Endothelial cell of umbilical vein (primary cell): ENCODE measurements at regions of chr7 and their contacts with region 1.

Region 1: GRCh38 chr7:15874774-15875173 is 188.3 kb upstream of the MEOX2 start:
- DNase-seq: peak; percentile 45
- H3K4me3 ChIP-seq: no peak overlapping the region
- H3K27ac ChIP-seq: no peak overlapping the region
- H3K4me1 ChIP-seq: no peaks in the 10 kb centered on the region
- H3K27me3 ChIP-seq: no peaks in the 10 kb centered on the region
- CTCF ChIP-seq: no peak
- POLR2A ChIP-seq: no peak

Region 2: GRCh38 chr7:15848339-15848738 is 26.4 kb before region 1 on chr7:
- CTCF ChIA-PET with region 1: no interaction called
- POLR2A ChIA-PET with region 1: no interaction called
- dilution Hi-C with region 1: no loop called
- intact Hi-C with region 1: no loop called
- DNase-seq: no peak
- H3K4me3 ChIP-seq: no peak overlapping the region
- H3K27ac ChIP-seq: no peak overlapping the region
- H3K4me1 ChIP-seq: peaks cover 5% of the 10 kb centered on the region
- H3K27me3 ChIP-seq: no peaks in the 10 kb centered on the region
- CTCF ChIP-seq: no peak
- POLR2A ChIP-seq: no peak

Region 3: DNA sequence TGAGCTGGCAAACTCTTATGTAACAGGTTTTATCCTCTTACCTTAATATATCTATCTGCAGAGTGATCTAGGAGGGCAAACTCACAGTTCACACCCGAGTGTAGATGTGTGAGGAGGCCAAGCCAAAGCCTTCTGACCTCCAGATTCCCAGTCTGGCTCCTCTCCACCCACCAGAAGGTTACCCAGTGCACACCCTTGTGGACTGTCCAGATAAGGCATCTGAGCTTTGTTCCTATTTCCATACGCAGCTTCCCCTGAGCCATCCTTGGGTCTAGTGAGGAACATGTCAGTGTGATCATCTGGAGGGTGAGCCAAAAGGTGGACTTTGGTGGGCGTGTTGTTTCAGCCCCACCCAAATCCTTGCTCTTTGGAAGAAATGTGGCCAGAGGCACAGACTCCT is 14.7 kb after region 1 on chr7:
- CTCF ChIA-PET with region 1: interaction called, 11 read pairs
- POLR2A ChIA-PET with region 1: interaction called, 4 read pairs
- dilution Hi-C with region 1: no loop called
- intact Hi-C with region 1: no loop called
- DNase-seq: peak; percentile 29
- H3K4me3 ChIP-seq: no peak overlapping the region
- H3K27ac ChIP-seq: no peak overlapping the region
- H3K4me1 ChIP-seq: no peaks in the 10 kb centered on the region
- H3K27me3 ChIP-seq: no peaks in the 10 kb centered on the region
- CTCF ChIP-seq: peak; percentile 21 to 24
- POLR2A ChIP-seq: no peak